B cell (primary cell): ENCODE measurements at regions of chr15 and their contacts with region 1.

Region 1: DNA sequence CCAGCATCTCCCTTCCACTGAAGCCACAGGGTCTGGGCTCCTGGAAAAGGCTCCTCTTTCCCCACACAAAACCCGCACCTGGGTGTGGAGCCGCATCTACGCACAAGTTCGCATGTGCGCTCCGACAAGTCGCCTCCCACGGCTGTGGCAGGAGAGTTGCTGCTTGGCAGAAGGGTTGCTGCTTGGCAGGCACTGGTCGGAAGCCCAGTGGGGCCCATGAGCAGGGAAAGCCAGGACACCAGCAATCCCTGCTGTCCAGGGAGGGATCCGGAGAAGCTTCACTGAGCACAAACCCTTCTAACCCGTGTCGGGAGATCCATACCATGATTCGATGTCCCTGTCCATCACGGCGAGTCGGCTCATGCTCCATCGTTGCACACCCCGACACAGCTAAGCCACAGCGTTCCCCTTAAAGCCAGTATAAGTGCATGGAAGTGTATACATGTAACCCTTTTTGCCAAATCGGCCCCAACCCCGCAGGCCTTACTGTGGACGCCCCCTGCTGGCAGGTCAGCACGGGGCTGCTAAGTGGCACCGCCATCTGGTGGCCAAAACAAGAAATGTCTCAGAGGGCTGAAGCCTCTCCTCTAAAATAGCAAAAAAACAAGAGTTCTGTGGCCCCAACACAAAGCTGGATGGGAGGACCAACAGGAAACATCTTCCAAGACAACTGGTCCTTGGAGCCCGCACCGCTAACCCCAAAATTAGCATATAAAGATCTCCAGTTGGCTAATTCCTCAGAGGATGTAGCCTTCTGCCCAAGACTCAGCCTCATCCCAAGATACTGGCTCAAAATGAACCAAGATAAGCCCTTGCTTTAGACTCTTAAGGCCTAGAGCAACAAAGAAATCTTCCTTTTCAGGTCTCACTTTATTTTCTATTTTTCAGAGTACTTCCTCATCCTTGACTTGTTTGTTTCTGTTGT is 8.3 kb downstream of the ANKRD63 start:
- DNase-seq: peak; percentile 92
- ATAC-seq: peak; percentile 85
- H3K4me3 ChIP-seq: no peak overlapping the region
- H3K4me3 Mint-ChIP-seq: no peak overlapping the region
- H3K27ac ChIP-seq: no peak overlapping the region
- H3K27ac Mint-ChIP-seq: peak overlapping the region; percentile 68
- H3K4me1 ChIP-seq: peaks cover 6 to 18% of the 10 kb centered on the region in 2 donors
- H3K4me1 Mint-ChIP-seq: peaks cover 22% of the 10 kb centered on the region
- H3K27me3 ChIP-seq: peaks cover 0 to 28% (median 9%) of the 10 kb centered on the region in 4 experiments
- H3K27me3 Mint-ChIP-seq: peaks cover 18% of the 10 kb centered on the region
- CTCF ChIP-seq: peak; percentile 100

Region 2: DNA sequence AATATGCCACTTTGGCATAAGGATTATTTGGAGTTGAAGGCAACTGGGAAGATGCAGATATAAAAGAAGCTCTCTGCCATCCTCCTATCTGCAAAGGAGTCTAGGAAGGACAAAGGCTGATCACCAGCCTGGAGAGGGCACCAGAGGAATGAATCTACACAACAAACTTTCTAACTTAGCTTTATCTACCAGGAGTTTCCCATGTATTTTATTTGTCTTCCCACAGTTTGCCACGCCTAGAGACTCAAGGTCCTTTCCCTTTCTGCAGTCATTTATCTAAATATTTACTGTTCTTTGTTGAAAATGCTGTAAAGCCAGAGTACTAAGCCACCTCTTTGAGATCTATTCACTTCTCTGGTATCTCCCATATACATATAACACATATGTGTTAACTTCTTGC is 386.8 kb before region 1 on chr15:
- CTCF ChIA-PET with region 1: interaction called, 20 read pairs
- POLR2A ChIA-PET with region 1: no interaction called
- intact Hi-C with region 1: no loop called
- DNase-seq: peak; percentile 10
- ATAC-seq: no peak
- H3K4me3 ChIP-seq: no peak overlapping the region
- H3K4me3 Mint-ChIP-seq: no peak overlapping the region
- H3K27ac ChIP-seq: no peak overlapping the region
- H3K27ac Mint-ChIP-seq: no peak overlapping the region
- H3K4me1 ChIP-seq: no peaks in the 10 kb centered on the region
- H3K4me1 Mint-ChIP-seq: no peaks in the 10 kb centered on the region
- H3K27me3 ChIP-seq: peaks cover 0 to 3% (median 1%) of the 10 kb centered on the region in 4 experiments
- H3K27me3 Mint-ChIP-seq: peaks cover 2% of the 10 kb centered on the region
- CTCF ChIP-seq: no peak

Region 3: GRCh38 chr15:40108855-40109735 is 165.5 kb before region 1 on chr15 and contains the start of gene BMF:
- CTCF ChIA-PET with region 1: interaction called, 28 read pairs
- POLR2A ChIA-PET with region 1: no interaction called
- intact Hi-C with region 1: loop called (anchors 2 kb)
- DNase-seq: peak; percentile 96
- ATAC-seq: peak; percentile 68
- H3K4me3 ChIP-seq: peak within 1 kb of the TSS; percentile 57 to 88 (median 86)
- H3K4me3 Mint-ChIP-seq: peak within 1 kb of the TSS; percentile 90
- H3K27ac ChIP-seq: peak within 1 kb of the TSS; percentile 97 to 98
- H3K27ac Mint-ChIP-seq: peak within 1 kb of the TSS; percentile 97
- H3K4me1 ChIP-seq: peaks cover 47 to 56% of the 10 kb centered on the region in 2 donors
- H3K4me1 Mint-ChIP-seq: peaks cover 57% of the 10 kb centered on the region
- H3K27me3 ChIP-seq: no peaks in the 10 kb centered on the region
- H3K27me3 Mint-ChIP-seq: no peaks in the 10 kb centered on the region
- CTCF ChIP-seq: peak; percentile 29
- total RNA-seq, gene BMF: 343 and 344 TPM in 2 replicates

Region 4: DNA sequence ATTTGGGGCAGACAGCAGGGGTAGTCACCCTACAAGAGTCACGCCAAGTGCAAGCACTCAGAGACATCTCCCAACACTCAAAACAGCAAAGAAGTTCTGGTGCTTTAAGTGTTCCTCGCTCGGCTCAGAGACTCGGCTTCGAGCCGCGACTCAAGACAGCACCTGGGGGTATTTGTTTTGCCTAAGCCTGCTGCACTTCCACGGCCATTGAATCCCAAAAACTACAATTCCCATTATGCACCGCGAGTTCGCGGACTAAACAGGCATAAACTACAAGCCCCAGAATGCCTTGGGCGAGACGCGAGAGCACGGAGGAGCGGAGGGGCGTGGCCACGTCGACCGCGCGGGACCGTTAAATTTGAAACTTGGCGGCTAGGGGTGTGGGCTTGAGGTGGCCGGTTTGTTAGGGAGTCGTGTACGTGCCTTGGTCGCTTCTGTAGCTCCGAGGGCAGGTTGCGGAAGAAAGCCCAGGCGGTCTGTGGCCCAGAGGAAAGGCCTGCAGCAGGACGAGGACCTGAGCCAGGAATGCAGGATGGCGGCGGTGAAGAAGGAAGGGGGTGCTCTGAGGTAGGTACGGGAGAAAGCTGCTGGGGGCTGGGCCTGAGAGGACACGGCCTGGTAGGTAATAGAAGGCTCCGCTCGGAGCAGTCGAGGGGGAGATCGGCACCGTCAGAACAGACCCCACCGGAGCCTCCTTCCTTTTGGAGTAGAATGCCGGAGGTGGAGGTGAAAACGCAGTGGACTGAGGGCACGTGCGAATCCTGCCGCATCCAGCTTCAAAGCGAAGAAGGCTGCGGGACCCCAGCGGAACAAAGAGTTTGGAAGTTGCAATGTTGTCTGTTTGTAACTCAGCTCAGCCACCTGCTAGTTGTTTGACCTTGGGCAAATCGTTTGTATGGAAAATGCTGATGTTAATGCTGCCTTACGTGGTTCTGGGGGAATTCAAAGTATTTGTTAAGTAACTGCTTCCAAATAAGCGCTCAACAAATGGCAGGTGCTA is 113.6 kb before region 1 on chr15 and contains the start of gene BUB1B:
- CTCF ChIA-PET with region 1: interaction called, 7 read pairs
- POLR2A ChIA-PET with region 1: no interaction called
- intact Hi-C with region 1: loop called (anchors 5 kb)
- DNase-seq: peak; percentile 96
- ATAC-seq: peak; percentile 97
- H3K4me3 ChIP-seq: peak within 1 kb of the TSS; percentile 56 to 77 (median 71)
- H3K4me3 Mint-ChIP-seq: no peak within 1 kb of the TSS
- H3K27ac ChIP-seq: no peak within 1 kb of the TSS
- H3K27ac Mint-ChIP-seq: no peak within 1 kb of the TSS
- H3K4me1 ChIP-seq: peaks cover 10 to 14% of the 10 kb centered on the region in 2 donors
- H3K4me1 Mint-ChIP-seq: peaks cover 7% of the 10 kb centered on the region
- H3K27me3 ChIP-seq: no peaks in the 10 kb centered on the region
- H3K27me3 Mint-ChIP-seq: no peaks in the 10 kb centered on the region
- CTCF ChIP-seq: no peak
- total RNA-seq, gene BUB1B: 2.9 and 4.4 TPM in 2 replicates

Region 5: DNA sequence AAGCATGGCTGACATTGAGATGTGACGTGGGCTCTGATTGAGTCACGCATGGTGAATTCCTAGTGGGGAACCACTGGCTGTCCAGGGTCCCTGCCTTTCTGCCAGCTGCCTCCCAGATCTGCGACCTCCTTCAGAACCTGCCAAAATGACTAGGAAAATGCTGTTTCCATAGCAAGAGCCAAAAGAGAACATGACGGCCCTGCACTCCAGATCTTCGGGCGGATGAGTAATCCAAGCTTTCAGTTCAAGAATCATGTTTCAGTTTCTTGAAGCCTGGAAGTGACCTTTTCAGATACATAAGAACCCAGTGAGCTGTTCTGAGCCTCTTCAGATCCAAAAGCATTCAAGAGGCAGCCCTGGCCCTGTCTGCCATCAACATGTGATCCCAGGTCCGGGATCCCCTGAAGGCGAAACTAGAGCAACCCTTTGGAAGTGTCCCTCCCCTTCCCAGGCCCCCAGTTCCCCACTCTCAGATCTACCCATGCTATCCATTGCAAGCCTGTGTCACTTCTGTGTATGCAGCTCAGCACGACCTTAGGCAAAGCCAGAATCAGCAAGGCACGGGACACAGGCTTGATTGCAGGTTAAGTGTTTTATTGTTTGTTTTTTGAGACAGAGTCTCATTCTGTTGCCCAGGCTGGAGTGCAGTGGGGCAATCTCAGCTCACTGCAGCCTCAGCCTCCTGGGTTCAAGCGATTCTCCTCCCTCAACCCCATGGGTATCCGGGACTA is 11.4 kb before region 1 on chr15:
- CTCF ChIA-PET with region 1: interaction called, 31 read pairs
- POLR2A ChIA-PET with region 1: no interaction called
- intact Hi-C with region 1: no loop called
- DNase-seq: no peak
- ATAC-seq: no peak
- H3K4me3 ChIP-seq: no peak overlapping the region
- H3K4me3 Mint-ChIP-seq: no peak overlapping the region
- H3K27ac ChIP-seq: no peak overlapping the region
- H3K27ac Mint-ChIP-seq: no peak overlapping the region
- H3K4me1 ChIP-seq: no peaks in the 10 kb centered on the region
- H3K4me1 Mint-ChIP-seq: no peaks in the 10 kb centered on the region
- H3K27me3 ChIP-seq: no peaks in the 10 kb centered on the region
- H3K27me3 Mint-ChIP-seq: no peaks in the 10 kb centered on the region
- CTCF ChIP-seq: no peak

Region 6: DNA sequence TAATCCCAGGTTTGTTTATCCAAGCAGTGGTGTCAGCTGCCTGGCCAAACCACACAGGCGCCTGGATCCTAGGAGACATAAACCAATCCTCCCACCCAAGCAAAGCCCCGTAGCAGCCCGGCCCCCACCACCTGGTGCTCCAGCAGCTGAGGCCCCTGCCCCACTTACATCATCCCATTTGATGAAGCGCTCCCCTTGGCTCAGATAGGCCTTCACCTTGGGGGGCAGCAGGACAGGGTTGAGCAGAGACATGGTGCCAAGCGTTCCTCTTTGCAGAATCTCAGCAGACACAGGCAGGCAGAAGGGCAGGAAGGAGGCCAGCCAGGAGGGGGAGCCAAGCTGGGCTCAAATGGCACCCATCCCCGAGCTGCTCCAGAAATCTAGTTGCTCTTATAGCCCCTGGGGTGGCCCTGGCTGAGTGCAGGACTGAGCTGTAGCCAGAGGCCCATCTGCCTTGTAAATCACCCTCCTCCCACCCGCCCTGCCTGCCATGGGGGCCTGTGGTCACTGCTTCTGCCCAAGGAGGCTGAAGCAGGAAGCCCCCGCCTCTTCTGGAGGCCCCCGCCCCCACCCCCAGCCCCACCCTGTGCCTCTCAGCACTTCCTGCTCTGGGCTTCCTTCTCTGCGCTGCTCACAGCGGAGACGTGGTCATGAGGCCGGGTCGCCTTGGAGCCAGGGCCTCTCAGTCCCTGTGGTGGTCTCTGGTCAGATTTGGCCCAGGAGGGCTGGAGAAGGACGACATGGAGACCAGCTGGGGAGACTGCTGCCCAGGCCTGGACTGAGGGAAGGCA is 33.0 kb after region 1 on chr15 and contains the start of gene PLCB2:
- CTCF ChIA-PET with region 1: interaction called, 227 read pairs
- POLR2A ChIA-PET with region 1: interaction called, 5 read pairs
- intact Hi-C with region 1: loop called (anchors 1 kb)
- DNase-seq: peak; percentile 84
- ATAC-seq: peak; percentile 79
- H3K4me3 ChIP-seq: peak within 1 kb of the TSS; percentile 81 to 98 (median 90)
- H3K4me3 Mint-ChIP-seq: peak within 1 kb of the TSS; percentile 98
- H3K27ac ChIP-seq: peak within 1 kb of the TSS; percentile 77 to 96
- H3K27ac Mint-ChIP-seq: peak within 1 kb of the TSS; percentile 99
- H3K4me1 ChIP-seq: peaks cover 25 to 36% of the 10 kb centered on the region in 2 donors
- H3K4me1 Mint-ChIP-seq: peaks cover 48% of the 10 kb centered on the region
- H3K27me3 ChIP-seq: no peaks in the 10 kb centered on the region
- H3K27me3 Mint-ChIP-seq: no peaks in the 10 kb centered on the region
- CTCF ChIP-seq: peak; percentile 59
- total RNA-seq, gene PLCB2: 155 and 166 TPM in 2 replicates

Region 7: DNA sequence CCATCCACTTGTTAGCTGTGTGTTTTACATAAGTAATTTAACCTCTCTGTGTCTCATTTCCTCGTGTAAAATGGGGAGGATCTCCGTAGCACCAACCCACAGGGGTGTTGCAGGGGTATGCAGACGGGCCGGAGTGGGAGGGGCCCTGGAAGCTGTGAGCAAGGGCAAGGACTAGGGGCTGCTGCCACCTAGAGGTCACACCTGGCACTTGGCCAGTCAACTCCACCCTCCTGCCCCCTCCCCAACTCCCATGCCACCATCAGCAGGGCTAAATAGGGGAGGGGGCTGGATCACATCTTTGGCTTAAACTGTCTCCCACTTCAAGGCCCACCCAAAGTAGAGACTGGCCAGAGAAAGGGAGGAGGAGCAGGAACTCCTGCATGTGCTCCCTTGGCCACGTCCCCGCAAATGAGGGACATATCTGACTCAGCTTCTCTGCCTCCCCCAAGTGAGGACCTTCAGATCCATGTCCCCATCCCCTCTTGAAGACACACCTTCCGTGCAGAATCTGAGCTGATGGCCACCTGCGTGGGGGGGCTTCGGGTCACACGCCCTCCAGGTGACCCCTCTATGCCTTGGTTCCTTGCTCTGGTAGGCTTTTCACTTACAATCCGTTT is 63.5 kb after region 1 on chr15:
- CTCF ChIA-PET with region 1: interaction called, 382 read pairs
- POLR2A ChIA-PET with region 1: interaction called, 4 read pairs
- intact Hi-C with region 1: loop called (anchors 1 kb)
- DNase-seq: peak; percentile 84
- ATAC-seq: peak; percentile 94
- H3K4me3 ChIP-seq: no peak overlapping the region
- H3K4me3 Mint-ChIP-seq: peak overlapping the region; percentile 37
- H3K27ac ChIP-seq: no peak overlapping the region
- H3K27ac Mint-ChIP-seq: no peak overlapping the region
- H3K4me1 ChIP-seq: peaks cover 21 to 31% of the 10 kb centered on the region in 2 donors
- H3K4me1 Mint-ChIP-seq: peaks cover 24% of the 10 kb centered on the region
- H3K27me3 ChIP-seq: peaks cover 0 to 12% (median 0%) of the 10 kb centered on the region in 4 experiments
- H3K27me3 Mint-ChIP-seq: peaks cover 4% of the 10 kb centered on the region
- CTCF ChIP-seq: peak; percentile 97